Left cardiac atrium (tissue), 4 donors: ENCODE measurements at regions of chr10 and their contacts with region 1.

Region 1: GRCh38 chr10:49225218-49225876 is 37.2 kb upstream of the TMEM273 start:
- DNase-seq: peak; percentile 49
- ATAC-seq: peak; percentile 79 to 90

Region 2: GRCh38 chr10:49280001-49280408 is 54.7 kb after region 1 on chr10:
- intact Hi-C with region 1: loop called in 1 of 2 experiments (anchors 5 kb)
- DNase-seq: no peak
- ATAC-seq: peak in 1 of 2 donors; percentile 38

Region 3: DNA sequence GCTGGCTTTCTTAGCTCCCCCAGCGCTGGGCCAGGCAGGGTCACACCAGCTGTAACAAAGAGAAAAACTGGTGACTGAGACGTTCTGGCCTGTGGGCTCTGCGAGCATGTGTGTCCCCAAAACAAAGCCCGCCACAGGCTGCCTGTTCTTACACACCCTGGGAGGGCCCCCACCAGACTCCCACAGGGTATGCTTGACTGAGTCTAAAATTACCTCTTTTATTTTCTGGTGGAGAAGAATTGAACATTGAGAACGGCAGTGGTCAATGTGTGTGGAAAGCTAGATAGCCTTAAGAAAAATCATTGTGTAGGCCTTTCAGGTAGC is 74.4 kb after region 1 on chr10:
- intact Hi-C with region 1: loop called in 1 of 2 experiments (anchors 5 kb)
- DNase-seq: no peak
- ATAC-seq: peak in 1 of 2 donors; percentile 2